GM12878 (cell line): ENCODE measurements at regions of chr1 and their contacts with region 1.

Region 1: GRCh38 chr1:245045087-245045881 is 109.5 kb upstream of the KIF26B start:
- DNase-seq: no peak
- ATAC-seq: peak; percentile 21; the same call in 2 of the 3 replicates
- H3K4me3 ChIP-seq: no peak overlapping the region
- H3K27ac ChIP-seq: no peak overlapping the region
- H3K4me1 ChIP-seq: no peaks in the 10 kb centered on the region
- H3K27me3 ChIP-seq: peaks cover 0 to 1% of the 10 kb centered on the region in 2 experiments; a peak in 1 of 4 replicates
- CTCF ChIP-seq: no peak
- EP300 ChIP-seq: no peak
- POLR2A ChIP-seq: no peak
- RAD21 ChIP-seq: no peak

Region 2: GRCh38 chr1:244801246-244801645 is 244.0 kb before region 1 on chr1:
- CTCF ChIA-PET with region 1: interaction called, 239 read pairs
- POLR2A ChIA-PET with region 1: interaction called, 3 read pairs
- RAD21 ChIA-PET with region 1: interaction called, 109 read pairs
- SMC1A ChIA-PET with region 1: interaction called, 91 read pairs
- in situ Hi-C with region 1: loop called (anchors 5 kb)
- intact Hi-C with region 1: loop called (anchors 1 kb)
- DNase-seq: no peak
- ATAC-seq: peak; percentile 96
- H3K4me3 ChIP-seq: no peak overlapping the region
- H3K27ac ChIP-seq: no peak overlapping the region
- H3K4me1 ChIP-seq: no peaks in the 10 kb centered on the region
- H3K27me3 ChIP-seq: no peaks in the 10 kb centered on the region; a peak in 1 of 4 replicates
- CTCF ChIP-seq: peak; percentile 62 to 71 (median 65); a peak in 5 of 6 replicates
- EP300 ChIP-seq: no peak
- POLR2A ChIP-seq: no peak
- RAD21 ChIP-seq: peak; percentile 88

Region 3: GRCh38 chr1:244835276-244836134 is 209.8 kb before region 1 on chr1 and contains the start of gene COX20:
- CTCF ChIA-PET with region 1: interaction called, 21 read pairs
- POLR2A ChIA-PET with region 1: interaction called, 3 read pairs
- RAD21 ChIA-PET with region 1: interaction called, 18 read pairs
- SMC1A ChIA-PET with region 1: interaction called, 15 read pairs
- in situ Hi-C with region 1: no loop called
- intact Hi-C with region 1: loop called (anchors 1 kb)
- DNase-seq: peak; percentile 60
- ATAC-seq: peak; percentile 74
- H3K4me3 ChIP-seq: peak within 1 kb of the TSS; percentile 72
- H3K27ac ChIP-seq: peak within 1 kb of the TSS; percentile 99
- H3K4me1 ChIP-seq: peaks cover 6% of the 10 kb centered on the region
- H3K27me3 ChIP-seq: no peaks in the 10 kb centered on the region
- CTCF ChIP-seq: no peak
- EP300 ChIP-seq: 0 out of 4 replicates have a peak, but pooled peaks of 1 of the 2 experiments have one; percentile 3
- POLR2A ChIP-seq: peak; percentile 91
- RAD21 ChIP-seq: no peak
- polyA plus RNA-seq, gene COX20: 91.9 to 95.3 TPM

Region 4: GRCh38 chr1:244864253-244865027 is 180.8 kb before region 1 on chr1 and contains the start of gene HNRNPU:
- CTCF ChIA-PET with region 1: interaction called, 51 read pairs
- POLR2A ChIA-PET with region 1: interaction called, 7 read pairs
- RAD21 ChIA-PET with region 1: interaction called, 15 read pairs
- SMC1A ChIA-PET with region 1: interaction called, 19 read pairs
- in situ Hi-C with region 1: no loop called
- intact Hi-C with region 1: loop called (anchors 1 kb)
- DNase-seq: peak; percentile 81
- ATAC-seq: peak; percentile 80
- H3K4me3 ChIP-seq: peak within 1 kb of the TSS; percentile 100
- H3K27ac ChIP-seq: peak within 1 kb of the TSS; percentile 99
- H3K4me1 ChIP-seq: peaks cover 3% of the 10 kb centered on the region; the same call in 1 of the 2 replicates
- H3K27me3 ChIP-seq: no peaks in the 10 kb centered on the region
- CTCF ChIP-seq: peak; percentile 9 to 30 (median 16); a peak in 3 of 6 replicates
- EP300 ChIP-seq: no peak
- POLR2A ChIP-seq: peak; percentile 99
- RAD21 ChIP-seq: no peak
- polyA plus RNA-seq, gene HNRNPU: 163 to 201 TPM

Region 5: GRCh38 chr1:244970661-244971551 is 74.4 kb before region 1 on chr1:
- CTCF ChIA-PET with region 1: interaction called, 8 read pairs
- POLR2A ChIA-PET with region 1: no interaction called
- RAD21 ChIA-PET with region 1: interaction called, 7 read pairs
- SMC1A ChIA-PET with region 1: interaction called, 10 read pairs
- in situ Hi-C with region 1: no loop called
- intact Hi-C with region 1: loop called (anchors 1 kb)
- DNase-seq: peak; percentile 74
- ATAC-seq: peak; percentile 84
- H3K4me3 ChIP-seq: peak overlapping the region; percentile 58
- H3K27ac ChIP-seq: peak overlapping the region; percentile 98
- H3K4me1 ChIP-seq: no peaks in the 10 kb centered on the region
- H3K27me3 ChIP-seq: no peaks in the 10 kb centered on the region
- CTCF ChIP-seq: peak; percentile 48 to 61 (median 53)
- EP300 ChIP-seq: no peak
- POLR2A ChIP-seq: peak; percentile 90
- RAD21 ChIP-seq: peak; percentile 24; the same call in 1 of the 2 replicates

Region 6: DNA sequence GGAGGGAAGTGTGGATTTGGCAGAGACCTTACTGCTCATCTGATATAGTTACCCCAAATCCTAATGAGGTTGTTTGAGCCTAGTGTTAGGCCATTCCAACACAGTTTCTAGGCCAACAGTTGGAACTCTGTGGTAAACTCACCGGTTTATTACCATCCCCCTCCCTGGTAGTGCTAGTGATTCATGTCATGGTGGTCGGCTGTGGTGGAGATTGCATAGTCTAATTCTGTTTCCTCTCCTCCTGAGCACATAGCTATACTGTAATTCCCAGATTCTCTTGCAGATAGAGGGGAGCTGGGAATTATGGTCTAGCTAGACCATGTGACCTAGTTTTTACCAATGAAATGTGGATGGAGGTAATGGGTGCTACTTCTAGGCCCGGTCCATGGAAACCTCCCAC is 14.2 kb before region 1 on chr1:
- CTCF ChIA-PET with region 1: interaction called, 27 read pairs
- POLR2A ChIA-PET with region 1: no interaction called
- RAD21 ChIA-PET with region 1: interaction called, 4 read pairs
- SMC1A ChIA-PET with region 1: interaction called, 9 read pairs
- in situ Hi-C with region 1: no loop called
- intact Hi-C with region 1: no loop called
- DNase-seq: no peak
- ATAC-seq: no peak
- H3K4me3 ChIP-seq: no peak overlapping the region
- H3K27ac ChIP-seq: no peak overlapping the region
- H3K4me1 ChIP-seq: no peaks in the 10 kb centered on the region
- H3K27me3 ChIP-seq: no peaks in the 10 kb centered on the region; a peak in 1 of 4 replicates
- CTCF ChIP-seq: no peak
- EP300 ChIP-seq: no peak
- POLR2A ChIP-seq: no peak
- RAD21 ChIP-seq: no peak